Psoas muscle (tissue), 8 donors: ENCODE measurements at regions of chr20 and their contacts with region 1.

Region 1: GRCh38 chr20:11057624-11058023 is 383.8 kb upstream of the JAG1 start:
- DNase-seq: no peak
- ATAC-seq: peak in 1 of 4 donors; percentile 30
- H3K4me3 ChIP-seq: no peak overlapping the region
- H3K27ac ChIP-seq: no peak overlapping the region
- H3K4me1 ChIP-seq: no peaks in the 10 kb centered on the region
- H3K27me3 ChIP-seq: no peaks in the 10 kb centered on the region
- CTCF ChIP-seq: no peak

Region 2: DNA sequence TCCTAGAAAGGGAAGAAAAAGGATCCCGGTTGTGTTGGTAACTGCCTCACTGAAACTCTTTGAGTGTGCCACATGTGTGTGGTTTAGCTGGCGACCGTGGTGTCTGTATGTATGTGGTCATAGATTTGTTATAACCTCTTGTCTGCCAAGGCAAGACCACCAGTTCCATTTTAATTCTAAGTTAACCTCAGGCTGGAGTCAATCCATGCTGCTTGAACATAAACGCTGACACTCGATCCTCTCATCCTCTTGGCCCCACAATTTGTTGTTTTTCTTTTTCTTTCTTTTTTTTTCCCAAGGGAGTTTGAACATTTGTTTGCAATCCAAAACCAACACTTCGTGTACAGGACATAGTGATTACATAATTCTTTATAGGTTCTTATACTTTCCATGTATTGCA is 64.9 kb before region 1 on chr20:
- intact Hi-C with region 1: loop called (anchors 10 kb)
- DNase-seq: no peak
- ATAC-seq: no peak
- H3K4me3 ChIP-seq: no peak overlapping the region
- H3K27ac ChIP-seq: no peak overlapping the region
- H3K4me1 ChIP-seq: peaks cover 5% of the 10 kb centered on the region
- H3K27me3 ChIP-seq: no peaks in the 10 kb centered on the region
- CTCF ChIP-seq: no peak

Region 3: DNA sequence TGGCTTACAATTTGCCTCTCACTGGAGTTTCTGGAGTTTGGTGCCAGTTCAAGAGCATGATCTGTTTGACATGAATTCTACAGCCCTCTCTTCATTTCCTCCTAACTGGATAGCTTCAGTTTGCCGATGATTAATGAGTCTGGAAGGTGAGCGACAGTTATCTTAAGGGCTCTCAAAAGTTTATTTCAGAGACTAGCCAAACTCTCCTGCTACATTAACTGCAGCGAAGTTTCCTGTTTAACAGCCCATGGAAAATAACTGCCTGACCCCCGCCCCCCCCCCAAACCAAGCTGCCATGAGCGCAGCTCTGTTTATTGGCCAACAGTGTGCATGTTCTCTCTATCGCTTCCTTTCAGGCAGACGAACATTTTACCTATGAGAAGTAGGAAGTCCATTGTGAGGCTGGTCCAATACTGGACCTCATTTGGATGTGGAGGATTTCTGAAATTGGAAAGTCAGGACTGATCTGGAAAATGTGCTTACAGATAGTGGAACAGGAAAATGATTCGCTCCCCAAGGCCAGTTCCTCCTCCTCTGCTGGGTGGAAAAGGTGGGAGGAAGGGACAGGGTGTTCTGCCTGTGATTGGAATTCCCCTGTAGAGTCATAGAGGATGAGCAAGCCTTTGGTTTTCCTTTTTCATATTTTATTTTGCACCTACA is 138.4 kb after region 1 on chr20:
- intact Hi-C with region 1: no loop called
- DNase-seq: no peak
- ATAC-seq: peak in 1 of 4 donors; percentile 16
- H3K4me3 ChIP-seq: no peak overlapping the region
- H3K27ac ChIP-seq: no peak overlapping the region
- H3K4me1 ChIP-seq: no peaks in the 10 kb centered on the region
- H3K27me3 ChIP-seq: no peaks in the 10 kb centered on the region
- CTCF ChIP-seq: no peak

Region 4: DNA sequence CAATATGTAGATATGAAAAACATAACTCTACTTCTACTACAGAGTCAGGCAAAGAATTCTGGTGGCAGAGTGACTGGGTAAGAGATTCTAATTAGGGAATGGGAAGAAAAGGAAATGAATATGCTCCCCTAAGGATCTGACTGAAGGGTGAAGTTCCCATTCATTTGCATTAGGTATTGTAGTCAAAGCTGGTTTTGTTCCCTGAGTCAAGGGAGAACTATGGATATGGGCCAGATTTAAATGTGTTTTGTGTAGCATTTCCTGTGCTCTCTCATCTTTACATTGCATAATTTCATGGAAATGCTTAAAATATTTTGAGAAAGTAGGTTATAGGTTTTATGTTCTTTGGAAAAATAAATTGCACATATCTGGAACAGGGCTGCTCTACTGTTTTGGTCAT is 1159.8 kb after region 1 on chr20:
- intact Hi-C with region 1: no loop called
- DNase-seq: no peak
- ATAC-seq: no peak
- H3K4me3 ChIP-seq: no peak overlapping the region
- H3K27ac ChIP-seq: no peak overlapping the region
- H3K4me1 ChIP-seq: no peaks in the 10 kb centered on the region
- H3K27me3 ChIP-seq: no peaks in the 10 kb centered on the region
- CTCF ChIP-seq: no peak